PC-3 (cell line): ENCODE measurements at regions of chr2 and their contacts with region 1.

Region 1: DNA sequence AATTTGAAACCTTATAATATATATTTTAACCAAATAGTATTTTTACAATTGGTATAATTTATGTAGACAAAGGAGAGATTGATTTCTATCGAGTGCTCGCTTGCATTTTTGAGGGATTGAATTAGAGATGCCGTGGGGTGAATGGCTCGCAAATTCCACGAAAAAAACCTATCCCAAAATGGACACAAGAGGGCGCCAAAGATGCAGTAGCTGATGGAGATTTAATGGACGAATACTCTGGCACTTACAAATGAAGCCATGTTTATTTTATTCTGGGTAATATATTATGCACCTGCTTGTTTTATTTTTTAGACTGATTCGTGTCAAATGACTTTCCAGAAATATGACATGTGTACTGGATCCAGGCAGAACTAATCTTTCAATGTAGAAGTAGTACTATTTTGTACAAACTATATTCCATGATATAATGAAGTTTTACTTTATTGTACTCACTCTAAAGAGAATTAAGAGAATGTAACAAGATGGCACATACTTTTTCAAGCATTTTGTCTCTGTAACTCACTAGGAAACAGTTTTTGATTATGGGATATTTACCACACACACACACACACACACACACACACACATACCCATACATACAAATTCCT is 505.4 kb downstream of the PLCL1 start:
- DNase-seq: peak; percentile 74
- ATAC-seq: peak; percentile 38; the same call in 1 of the 2 replicates
- H3K4me3 ChIP-seq: no peak overlapping the region
- H3K27ac ChIP-seq: no peak overlapping the region
- H3K4me1 ChIP-seq: no peaks in the 10 kb centered on the region
- H3K27me3 ChIP-seq: peaks cover 37% of the 10 kb centered on the region
- CTCF ChIP-seq: peak; percentile 81

Region 2: DNA sequence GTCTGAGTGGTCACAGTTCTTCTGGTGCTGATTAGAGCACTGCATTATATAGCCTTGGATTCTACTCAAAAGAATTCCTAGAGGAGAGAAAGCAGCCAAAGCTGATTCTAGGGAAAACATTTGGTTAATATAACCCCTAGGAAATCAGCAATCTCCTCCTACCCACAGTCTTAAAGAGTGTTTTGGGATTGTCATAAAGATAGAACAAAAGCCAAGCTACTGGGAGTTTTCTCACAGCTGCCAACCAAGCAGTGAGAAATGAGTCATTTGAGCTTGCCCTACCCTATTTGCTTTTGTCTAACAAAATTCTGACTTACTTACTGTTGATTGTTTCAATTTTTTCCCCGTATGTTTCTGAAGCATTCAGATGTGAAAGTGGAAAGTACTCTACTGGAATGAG is 36.1 kb before region 1 on chr2:
- CTCF ChIA-PET with region 1: no interaction called
- POLR2A ChIA-PET with region 1: no interaction called
- intact Hi-C with region 1: no loop called
- DNase-seq: no peak
- ATAC-seq: no peak
- H3K4me3 ChIP-seq: no peak overlapping the region
- H3K27ac ChIP-seq: no peak overlapping the region
- H3K4me1 ChIP-seq: no peaks in the 10 kb centered on the region
- H3K27me3 ChIP-seq: peaks cover 6% of the 10 kb centered on the region; the same call in 1 of the 2 replicates
- CTCF ChIP-seq: no peak

Region 3: GRCh38 chr2:198287706-198288105 is 22.1 kb before region 1 on chr2:
- CTCF ChIA-PET with region 1: no interaction called
- POLR2A ChIA-PET with region 1: no interaction called
- intact Hi-C with region 1: no loop called
- DNase-seq: no peak
- ATAC-seq: no peak
- H3K4me3 ChIP-seq: no peak overlapping the region
- H3K27ac ChIP-seq: no peak overlapping the region
- H3K4me1 ChIP-seq: no peaks in the 10 kb centered on the region
- H3K27me3 ChIP-seq: peaks cover 60% of the 10 kb centered on the region
- CTCF ChIP-seq: no peak

Region 4: DNA sequence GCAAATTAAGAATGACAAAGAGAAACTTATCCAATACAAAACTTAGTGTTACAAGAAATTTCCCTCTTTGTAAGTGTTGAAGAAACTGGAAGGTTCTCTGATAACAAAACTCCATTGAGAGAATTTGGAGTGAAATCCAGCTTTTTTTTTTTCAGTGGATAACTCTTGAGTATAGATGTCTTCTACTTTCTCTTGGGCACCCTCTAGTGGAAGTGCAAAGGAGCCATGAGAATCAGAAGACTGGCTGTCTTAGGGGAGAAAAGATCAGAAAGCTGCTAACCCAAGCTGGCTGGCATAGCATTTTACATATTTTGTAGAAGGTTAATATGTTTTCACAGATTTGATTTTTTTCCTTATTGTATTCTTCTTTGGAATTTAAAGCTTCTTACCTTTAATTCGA is 1286.8 kb after region 1 on chr2:
- CTCF ChIA-PET with region 1: no interaction called
- POLR2A ChIA-PET with region 1: no interaction called
- intact Hi-C with region 1: loop called (anchors 10 kb)
- DNase-seq: peak; percentile 51
- ATAC-seq: peak; percentile 48
- H3K4me3 ChIP-seq: no peak overlapping the region
- H3K27ac ChIP-seq: no peak overlapping the region
- H3K4me1 ChIP-seq: no peaks in the 10 kb centered on the region
- H3K27me3 ChIP-seq: peaks cover 47% of the 10 kb centered on the region
- CTCF ChIP-seq: peak; percentile 72

Region 5: GRCh38 chr2:199739413-199740110 is 1429.8 kb after region 1 on chr2:
- CTCF ChIA-PET with region 1: no interaction called
- POLR2A ChIA-PET with region 1: no interaction called
- intact Hi-C with region 1: loop called (anchors 2 kb)
- DNase-seq: peak; percentile 78
- ATAC-seq: peak; percentile 62
- H3K4me3 ChIP-seq: no peak overlapping the region
- H3K27ac ChIP-seq: no peak overlapping the region
- H3K4me1 ChIP-seq: peaks cover 16% of the 10 kb centered on the region
- H3K27me3 ChIP-seq: peaks cover 37% of the 10 kb centered on the region
- CTCF ChIP-seq: peak; percentile 98